ENCODE measurements at regions of chr14 and their contacts with region 1.

Region 1: DNA sequence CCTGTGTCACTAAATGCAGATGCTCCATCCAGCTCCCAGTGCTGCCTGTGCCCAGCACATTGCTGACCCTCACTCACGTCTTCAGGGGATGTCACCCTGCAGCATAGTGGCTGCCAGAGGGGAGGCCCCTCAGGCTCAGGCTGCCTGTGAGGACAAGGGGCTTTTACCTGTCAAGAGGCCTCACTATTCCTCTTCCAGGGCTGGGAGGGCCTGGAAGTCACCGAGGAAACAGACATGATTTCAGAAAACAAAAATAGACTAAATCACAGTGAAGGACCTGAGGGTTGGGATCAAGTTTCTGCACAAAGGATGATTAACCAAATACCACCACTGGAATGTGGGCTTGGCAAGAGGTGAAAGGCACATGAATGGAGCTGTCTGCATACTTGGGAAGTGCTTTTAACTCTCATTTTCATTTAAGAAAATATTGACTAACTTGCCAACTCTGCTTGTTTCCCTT is 1202.3 kb downstream of the BCL11B start:
- DNase-seq: no peak
- ATAC-seq: no peak
- H3K4me3 ChIP-seq: no peak overlapping the region
- H3K27ac ChIP-seq: no peak overlapping the region
- H3K4me1 ChIP-seq: no peaks in the 10 kb centered on the region
- H3K27me3 ChIP-seq: no peaks in the 10 kb centered on the region
- CTCF ChIP-seq: no peak
- POLR2A ChIP-seq: no peak
- RAD21 ChIP-seq: no peak

Region 2: GRCh38 chr14:97788364-97788763 is 281.4 kb before region 1 on chr14:
- CTCF ChIA-PET with region 1: no interaction called
- POLR2A ChIA-PET with region 1: no interaction called
- dilution Hi-C with region 1: no loop called
- in situ Hi-C with region 1: no loop called
- intact Hi-C with region 1: no loop called
- DNase-seq: no peak
- ATAC-seq: no peak
- H3K4me3 ChIP-seq: no peak overlapping the region
- H3K27ac ChIP-seq: no peak overlapping the region
- H3K4me1 ChIP-seq: no peaks in the 10 kb centered on the region
- H3K27me3 ChIP-seq: no peaks in the 10 kb centered on the region
- CTCF ChIP-seq: no peak
- POLR2A ChIP-seq: no peak
- RAD21 ChIP-seq: no peak

Region 3: DNA sequence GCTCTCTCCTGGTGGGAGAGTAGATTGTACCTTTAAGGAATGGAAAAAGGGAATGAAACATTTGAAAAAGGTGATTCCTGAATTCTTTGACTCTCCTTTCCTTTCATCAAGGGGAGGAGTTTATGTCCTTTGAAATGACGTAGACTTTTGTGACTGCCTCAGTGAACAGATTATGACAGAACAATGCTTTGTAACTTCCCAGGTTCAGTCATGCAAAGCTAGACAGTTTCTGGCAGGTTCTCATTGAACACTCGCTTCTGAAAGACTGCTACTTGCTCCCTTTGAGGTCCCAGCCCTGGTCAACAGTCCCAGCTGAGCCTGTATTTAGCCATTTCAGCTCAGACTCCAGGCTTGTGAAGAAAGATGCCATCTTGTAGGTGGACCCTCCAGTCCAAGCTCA is 23.3 kb after region 1 on chr14:
- CTCF ChIA-PET with region 1: no interaction called
- POLR2A ChIA-PET with region 1: no interaction called
- dilution Hi-C with region 1: no loop called
- in situ Hi-C with region 1: no loop called
- intact Hi-C with region 1: loop called (anchors 1 kb)
- DNase-seq: no peak
- ATAC-seq: no peak
- H3K4me3 ChIP-seq: no peak overlapping the region
- H3K27ac ChIP-seq: no peak overlapping the region
- H3K4me1 ChIP-seq: no peaks in the 10 kb centered on the region
- H3K27me3 ChIP-seq: no peaks in the 10 kb centered on the region
- CTCF ChIP-seq: no peak
- POLR2A ChIP-seq: no peak
- RAD21 ChIP-seq: no peak

Region 4: DNA sequence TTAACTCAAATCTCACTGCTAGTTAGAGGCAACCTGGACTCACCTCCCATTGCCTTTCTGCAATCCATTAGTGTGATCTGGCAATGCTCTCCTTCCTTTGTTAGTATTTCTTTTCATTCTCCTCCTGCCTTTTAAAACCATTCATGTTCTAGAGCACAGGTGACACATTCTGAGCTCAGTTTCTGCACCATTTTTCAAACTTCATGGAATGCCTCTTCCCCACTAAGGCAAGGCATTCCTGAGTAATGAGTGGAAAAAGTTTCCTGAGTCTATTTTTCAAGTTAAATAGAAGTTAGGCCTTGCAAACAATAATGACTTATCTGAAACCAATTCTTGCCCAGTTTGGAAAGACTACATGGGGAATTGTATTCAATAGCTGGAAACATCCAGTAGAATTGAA is 200.5 kb after region 1 on chr14:
- CTCF ChIA-PET with region 1: no interaction called
- POLR2A ChIA-PET with region 1: no interaction called
- dilution Hi-C with region 1: no loop called
- in situ Hi-C with region 1: no loop called
- intact Hi-C with region 1: no loop called
- DNase-seq: no peak
- ATAC-seq: no peak
- H3K4me3 ChIP-seq: no peak overlapping the region
- H3K27ac ChIP-seq: no peak overlapping the region
- H3K4me1 ChIP-seq: no peaks in the 10 kb centered on the region
- H3K27me3 ChIP-seq: no peaks in the 10 kb centered on the region
- CTCF ChIP-seq: no peak
- POLR2A ChIP-seq: no peak
- RAD21 ChIP-seq: no peak